Naive thymus-derived CD4-positive, alpha-beta T cell (primary cell): ENCODE measurements at regions of chr11 and their contacts with region 1.

Region 1: DNA sequence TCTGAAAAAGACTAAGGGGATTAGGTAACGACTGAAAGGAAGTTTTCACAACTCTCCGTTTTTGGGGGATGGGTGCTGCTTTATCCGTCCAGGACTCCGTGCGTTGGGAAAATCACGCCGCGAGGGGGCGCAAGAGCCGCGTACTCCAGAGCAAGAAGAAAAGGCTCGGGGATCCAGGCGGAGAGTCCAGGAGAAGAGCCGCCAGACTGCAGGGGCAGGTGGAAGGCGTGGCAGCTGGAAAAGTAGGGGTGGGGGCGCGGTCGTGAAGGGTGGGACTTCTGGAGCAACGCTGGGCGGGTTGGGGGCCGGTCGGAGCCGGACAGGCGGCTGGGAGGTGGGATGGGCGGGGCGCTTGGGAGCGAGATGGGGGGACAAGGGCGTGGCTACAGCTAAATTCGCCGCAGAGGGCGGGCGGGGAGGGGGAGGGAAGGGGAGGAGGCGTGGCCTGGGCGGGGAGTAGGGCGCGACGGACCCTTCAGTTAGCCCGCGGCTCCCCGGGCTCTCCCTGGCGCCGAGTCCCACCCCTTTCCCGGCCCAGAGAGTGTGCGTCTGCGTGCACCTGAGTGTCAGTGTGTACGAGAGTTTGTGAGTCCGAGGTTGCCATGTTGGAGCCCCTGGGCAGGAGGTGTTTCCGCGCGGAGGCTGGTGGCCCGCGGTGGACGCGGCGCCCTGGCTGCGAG is 613 bp upstream of the ARHGEF17 start:
- DNase-seq: peak; percentile 75 to 90 (median 86)
- ATAC-seq: peak; percentile 83
- H3K4me3 ChIP-seq: peak overlapping the region; percentile 63
- H3K4me3 Mint-ChIP-seq: peak overlapping the region; percentile 83 to 95 (median 91)
- H3K27ac ChIP-seq: no peak overlapping the region
- H3K27ac Mint-ChIP-seq: peak overlapping the region in 5 of 9 donors; percentile 9 to 68 (median 31)
- H3K4me1 ChIP-seq: peaks cover 4 to 5% of the 10 kb centered on the region in 2 donors
- H3K4me1 Mint-ChIP-seq: peaks cover 8 to 13% (median 11%) of the 10 kb centered on the region in 7 donors
- H3K27me3 ChIP-seq: peaks cover 0 to 4% of the 10 kb centered on the region in 2 donors
- H3K27me3 Mint-ChIP-seq: peaks cover 14 to 55% (median 21%) of the 10 kb centered on the region in 5 donors

Region 2: GRCh38 chr11:73295231-73295995 is 12.1 kb before region 1 on chr11:
- CTCF ChIA-PET with region 1: interaction called, 10 read pairs
- POLR2A ChIA-PET with region 1: no interaction called
- intact Hi-C with region 1: no loop called
- DNase-seq: peak; percentile 35 to 79 (median 65)
- ATAC-seq: peak; percentile 92
- H3K4me3 ChIP-seq: no peak overlapping the region
- H3K4me3 Mint-ChIP-seq: no peak overlapping the region
- H3K27ac ChIP-seq: no peak overlapping the region
- H3K27ac Mint-ChIP-seq: no peak overlapping the region
- H3K4me1 ChIP-seq: no peaks in the 10 kb centered on the region
- H3K4me1 Mint-ChIP-seq: peaks cover 0 to 4% (median 0%) of the 10 kb centered on the region in 7 donors
- H3K27me3 ChIP-seq: no peaks in the 10 kb centered on the region
- H3K27me3 Mint-ChIP-seq: peaks cover 9 to 17% (median 10%) of the 10 kb centered on the region in 5 donors

Region 3: GRCh38 chr11:73345481-73346147 is 38.2 kb after region 1 on chr11:
- CTCF ChIA-PET with region 1: no interaction called
- POLR2A ChIA-PET with region 1: no interaction called
- intact Hi-C with region 1: no loop called
- DNase-seq: no peak
- ATAC-seq: no peak
- H3K4me3 ChIP-seq: no peak overlapping the region
- H3K4me3 Mint-ChIP-seq: no peak overlapping the region
- H3K27ac ChIP-seq: no peak overlapping the region
- H3K27ac Mint-ChIP-seq: peak overlapping the region in 1 of 9 donors; percentile 38
- H3K4me1 ChIP-seq: no peaks in the 10 kb centered on the region
- H3K4me1 Mint-ChIP-seq: peaks cover 0 to 6% (median 0%) of the 10 kb centered on the region in 7 donors
- H3K27me3 ChIP-seq: no peaks in the 10 kb centered on the region
- H3K27me3 Mint-ChIP-seq: peaks cover 0 to 10% (median 7%) of the 10 kb centered on the region in 5 donors

Region 4: GRCh38 chr11:73393479-73394380 is 86.3 kb after region 1 on chr11:
- CTCF ChIA-PET with region 1: no interaction called
- POLR2A ChIA-PET with region 1: no interaction called
- intact Hi-C with region 1: loop called (anchors 1 kb)
- DNase-seq: peak; percentile 43 to 74 (median 62)
- ATAC-seq: peak; percentile 69
- H3K4me3 ChIP-seq: no peak overlapping the region
- H3K4me3 Mint-ChIP-seq: peak overlapping the region in 1 of 10 donors; percentile 9
- H3K27ac ChIP-seq: no peak overlapping the region
- H3K27ac Mint-ChIP-seq: peak overlapping the region in 7 of 9 donors; percentile 14 to 75 (median 56)
- H3K4me1 ChIP-seq: no peaks in the 10 kb centered on the region
- H3K4me1 Mint-ChIP-seq: peaks cover 0 to 21% (median 5%) of the 10 kb centered on the region in 7 donors
- H3K27me3 ChIP-seq: no peaks in the 10 kb centered on the region
- H3K27me3 Mint-ChIP-seq: no peaks in the 10 kb centered on the region

Region 5: GRCh38 chr11:73633999-73634398 is 326.5 kb after region 1 on chr11:
- CTCF ChIA-PET with region 1: no interaction called
- POLR2A ChIA-PET with region 1: no interaction called
- intact Hi-C with region 1: no loop called
- DNase-seq: peak in 6 of 9 donors; percentile 18 to 40 (median 36)
- ATAC-seq: peak; percentile 41
- H3K4me3 ChIP-seq: no peak overlapping the region
- H3K4me3 Mint-ChIP-seq: peak overlapping the region in 8 of 10 donors; percentile 12 to 53 (median 30)
- H3K27ac ChIP-seq: peak overlapping the region; percentile 17
- H3K27ac Mint-ChIP-seq: peak overlapping the region; percentile 45 to 87 (median 71)
- H3K4me1 ChIP-seq: peaks cover 0 to 19% of the 10 kb centered on the region in 2 donors
- H3K4me1 Mint-ChIP-seq: peaks cover 9 to 26% (median 18%) of the 10 kb centered on the region in 7 donors
- H3K27me3 ChIP-seq: no peaks in the 10 kb centered on the region
- H3K27me3 Mint-ChIP-seq: no peaks in the 10 kb centered on the region

Region 6: DNA sequence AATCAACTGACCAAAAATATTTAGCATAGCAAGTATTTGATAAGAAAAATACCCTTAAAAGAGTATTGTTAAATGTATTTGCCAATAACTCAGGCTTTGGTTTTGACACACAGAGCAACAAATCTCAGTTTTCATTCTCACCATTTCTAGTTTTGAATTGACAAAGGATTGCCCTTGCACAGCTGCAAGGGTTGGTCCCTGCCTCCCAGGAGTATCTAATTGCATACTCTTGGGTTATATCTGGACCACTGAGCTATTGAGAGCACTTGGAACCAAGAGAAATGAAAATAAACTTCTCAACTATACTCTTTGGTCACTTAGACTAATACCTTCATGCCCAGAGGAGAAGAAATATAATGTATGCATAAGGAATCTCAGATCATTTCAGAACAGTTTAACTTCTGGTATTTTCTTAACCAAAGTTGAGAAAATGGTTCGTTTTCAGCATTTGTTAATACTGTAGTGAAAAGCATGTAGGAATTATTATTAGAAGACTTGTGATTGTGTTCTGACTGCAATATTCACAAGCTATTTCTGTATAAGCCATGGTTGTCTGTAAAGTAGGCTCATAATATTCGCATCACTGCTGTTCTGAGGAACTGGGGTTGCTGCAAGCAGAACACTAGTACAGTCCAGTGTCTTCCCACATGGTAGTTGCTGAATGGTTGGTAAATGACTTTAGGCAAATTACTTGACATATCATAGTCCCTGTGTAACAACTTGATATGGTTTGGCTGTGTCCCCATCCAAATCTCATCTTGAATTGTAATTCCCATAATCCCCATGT is 855.4 kb after region 1 on chr11:
- CTCF ChIA-PET with region 1: no interaction called
- POLR2A ChIA-PET with region 1: no interaction called
- intact Hi-C with region 1: no loop called
- DNase-seq: no peak
- ATAC-seq: no peak
- H3K4me3 ChIP-seq: no peak overlapping the region
- H3K4me3 Mint-ChIP-seq: no peak overlapping the region
- H3K27ac ChIP-seq: no peak overlapping the region
- H3K27ac Mint-ChIP-seq: peak overlapping the region in 1 of 9 donors; percentile 41
- H3K4me1 ChIP-seq: peaks cover 0 to 1% of the 10 kb centered on the region in 2 donors
- H3K4me1 Mint-ChIP-seq: peaks cover 11 to 49% (median 28%) of the 10 kb centered on the region in 7 donors
- H3K27me3 ChIP-seq: no peaks in the 10 kb centered on the region
- H3K27me3 Mint-ChIP-seq: no peaks in the 10 kb centered on the region